ENCODE measurements at regions of chr2 and their contacts with region 1.

Region 1: GRCh38 chr2:113203901-113204519 is 30.2 kb downstream of the PSD4 start:
- DNase-seq: peak; percentile 85 to 90
- H3K4me3 ChIP-seq: no peak overlapping the region
- H3K4me3 Mint-ChIP-seq: no peak overlapping the region
- H3K27ac Mint-ChIP-seq: peak overlapping the region; percentile 65
- H3K4me1 ChIP-seq: peaks cover 14% of the 10 kb centered on the region
- H3K4me1 Mint-ChIP-seq: peaks cover 26% of the 10 kb centered on the region
- H3K27me3 ChIP-seq: no peaks in the 10 kb centered on the region
- H3K27me3 Mint-ChIP-seq: no peaks in the 10 kb centered on the region
- CTCF ChIP-seq: peak; percentile 91 to 92

Region 2: DNA sequence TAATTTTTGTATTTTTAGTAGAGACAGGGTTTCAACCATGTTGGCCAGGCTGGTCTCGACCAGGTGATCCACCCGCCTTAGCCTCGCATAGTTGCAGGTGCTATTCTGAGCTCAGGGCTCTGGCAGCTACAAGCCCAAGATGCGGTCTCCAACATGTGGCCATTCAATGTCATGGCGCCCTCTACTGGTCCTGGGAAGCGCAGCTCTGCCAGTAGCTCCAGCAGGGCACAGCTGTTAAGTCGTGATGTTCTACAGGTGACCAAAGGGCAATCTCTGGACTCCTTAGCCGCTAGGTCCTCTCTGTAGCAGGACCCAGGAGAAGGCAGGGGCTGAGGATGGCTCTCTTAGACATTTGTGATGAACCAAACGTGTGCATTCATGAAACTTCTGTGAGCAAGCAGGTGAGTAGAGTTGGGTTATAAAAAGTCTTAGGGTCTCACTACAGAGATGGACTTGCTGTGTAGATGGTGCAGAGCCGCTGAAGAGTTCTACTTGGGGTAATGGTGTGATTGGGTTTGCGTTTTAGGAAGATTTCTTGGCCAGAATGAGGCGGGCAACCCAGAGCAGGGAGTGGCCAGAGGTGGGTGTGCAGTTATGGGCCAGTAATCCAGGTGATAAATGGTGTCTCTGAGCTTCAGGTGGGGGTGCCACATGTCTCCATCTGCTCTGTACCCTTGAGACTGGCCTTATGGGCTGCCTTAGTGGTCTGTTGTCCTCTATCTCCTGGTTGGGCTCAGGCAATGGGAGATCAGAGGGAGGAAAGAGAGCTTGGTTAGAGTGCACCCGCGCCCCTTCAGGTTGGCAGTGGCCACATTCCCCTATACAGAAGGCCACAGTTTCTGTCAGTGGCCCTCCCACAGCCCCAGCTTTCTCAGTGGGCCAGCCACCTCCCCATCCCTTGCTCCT is 262.0 kb before region 1 on chr2:
- CTCF ChIA-PET with region 1: no interaction called
- POLR2A ChIA-PET with region 1: no interaction called
- intact Hi-C with region 1: no loop called
- DNase-seq: peak; percentile 79 to 84
- H3K4me3 ChIP-seq: no peak overlapping the region
- H3K4me3 Mint-ChIP-seq: no peak overlapping the region
- H3K27ac Mint-ChIP-seq: no peak overlapping the region
- H3K4me1 ChIP-seq: peaks cover 9% of the 10 kb centered on the region; the same call in 1 of the 2 replicates
- H3K4me1 Mint-ChIP-seq: peaks cover 5% of the 10 kb centered on the region
- H3K27me3 ChIP-seq: no peaks in the 10 kb centered on the region
- H3K27me3 Mint-ChIP-seq: no peaks in the 10 kb centered on the region
- CTCF ChIP-seq: peak; percentile 80 to 84

Region 3: GRCh38 chr2:113124181-113124961 is 79.6 kb before region 1 on chr2:
- CTCF ChIA-PET with region 1: no interaction called
- POLR2A ChIA-PET with region 1: no interaction called
- intact Hi-C with region 1: no loop called
- DNase-seq: no peak
- H3K4me3 ChIP-seq: no peak overlapping the region
- H3K4me3 Mint-ChIP-seq: no peak overlapping the region
- H3K27ac Mint-ChIP-seq: no peak overlapping the region
- H3K4me1 ChIP-seq: peaks cover 6% of the 10 kb centered on the region
- H3K4me1 Mint-ChIP-seq: peaks cover 7% of the 10 kb centered on the region
- H3K27me3 ChIP-seq: no peaks in the 10 kb centered on the region
- H3K27me3 Mint-ChIP-seq: peaks cover 3% of the 10 kb centered on the region
- CTCF ChIP-seq: no peak

Region 4: GRCh38 chr2:113219889-113220641 is 16.1 kb after region 1 on chr2:
- CTCF ChIA-PET with region 1: interaction called, 6 read pairs
- POLR2A ChIA-PET with region 1: no interaction called
- intact Hi-C with region 1: loop called (anchors 1 kb)
- DNase-seq: no peak
- H3K4me3 ChIP-seq: no peak overlapping the region
- H3K4me3 Mint-ChIP-seq: no peak overlapping the region
- H3K27ac Mint-ChIP-seq: peak overlapping the region; percentile 98
- H3K4me1 ChIP-seq: peaks cover 54% of the 10 kb centered on the region
- H3K4me1 Mint-ChIP-seq: peaks cover 31% of the 10 kb centered on the region
- H3K27me3 ChIP-seq: no peaks in the 10 kb centered on the region
- H3K27me3 Mint-ChIP-seq: no peaks in the 10 kb centered on the region
- CTCF ChIP-seq: no peak

Region 5: DNA sequence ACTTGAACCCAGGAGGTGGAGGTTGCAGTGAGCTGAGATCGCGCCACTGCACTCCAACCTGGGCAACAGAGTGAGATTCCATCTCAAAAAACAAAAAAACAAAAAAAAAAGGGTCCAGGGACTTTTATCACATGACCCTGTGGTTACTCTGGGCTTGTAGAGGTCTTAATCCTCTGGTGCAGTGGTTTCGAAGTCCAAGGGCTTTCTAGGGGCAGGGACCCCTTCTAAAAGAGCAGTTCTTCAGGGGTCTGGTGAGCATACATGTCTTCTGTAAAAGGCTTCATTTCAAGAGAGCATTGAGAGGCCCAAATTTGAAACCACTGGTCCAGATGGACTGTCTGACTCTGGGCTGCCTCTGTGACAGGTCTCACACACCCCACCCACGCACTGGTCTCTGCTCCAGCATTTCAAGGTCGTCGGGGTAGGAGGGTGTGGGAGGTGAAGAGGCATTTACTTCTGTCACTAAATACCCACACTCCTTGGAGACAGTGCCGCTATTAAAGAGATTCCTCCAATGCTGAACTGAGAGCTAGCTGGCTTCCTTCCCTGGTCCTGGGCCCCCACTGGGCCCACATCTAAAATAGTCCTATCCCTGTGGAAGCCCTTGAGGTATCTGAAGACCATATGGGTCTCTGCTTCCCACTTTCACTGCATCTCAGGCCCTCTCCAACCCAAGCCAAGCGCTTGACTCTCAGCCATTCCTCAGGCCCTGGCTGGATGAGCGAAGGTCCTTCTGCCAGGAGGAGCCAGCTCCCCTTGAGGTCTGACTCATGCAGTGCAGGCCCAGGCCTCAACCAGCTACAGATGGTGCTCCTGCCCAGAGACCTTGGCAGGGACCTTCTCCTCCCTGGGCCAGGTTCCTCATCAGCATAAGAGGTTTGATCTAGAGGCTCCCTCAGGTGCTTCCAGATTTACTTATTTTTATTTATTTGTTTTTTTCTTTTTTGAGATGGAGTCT is 29.9 kb after region 1 on chr2:
- CTCF ChIA-PET with region 1: interaction called, 70 read pairs
- POLR2A ChIA-PET with region 1: interaction called, 17 read pairs
- intact Hi-C with region 1: loop called (anchors 1 kb)
- DNase-seq: peak; percentile 45 to 68
- H3K4me3 ChIP-seq: no peak overlapping the region
- H3K4me3 Mint-ChIP-seq: peak overlapping the region; percentile 95
- H3K27ac Mint-ChIP-seq: peak overlapping the region; percentile 97
- H3K4me1 ChIP-seq: peaks cover 76% of the 10 kb centered on the region
- H3K4me1 Mint-ChIP-seq: peaks cover 54% of the 10 kb centered on the region
- H3K27me3 ChIP-seq: no peaks in the 10 kb centered on the region
- H3K27me3 Mint-ChIP-seq: no peaks in the 10 kb centered on the region
- CTCF ChIP-seq: peak; percentile 40 to 42

Region 6: GRCh38 chr2:113248997-113249770 is 45.2 kb after region 1 on chr2:
- CTCF ChIA-PET with region 1: interaction called, 48 read pairs
- POLR2A ChIA-PET with region 1: no interaction called
- intact Hi-C with region 1: loop called (anchors 1 kb)
- DNase-seq: peak; percentile 78 to 81
- H3K4me3 ChIP-seq: no peak overlapping the region
- H3K4me3 Mint-ChIP-seq: no peak overlapping the region
- H3K27ac Mint-ChIP-seq: no peak overlapping the region
- H3K4me1 ChIP-seq: peaks cover 15% of the 10 kb centered on the region; the same call in 1 of the 2 replicates
- H3K4me1 Mint-ChIP-seq: peaks cover 20% of the 10 kb centered on the region
- H3K27me3 ChIP-seq: no peaks in the 10 kb centered on the region
- H3K27me3 Mint-ChIP-seq: no peaks in the 10 kb centered on the region
- CTCF ChIP-seq: peak; percentile 91

Region 7: DNA sequence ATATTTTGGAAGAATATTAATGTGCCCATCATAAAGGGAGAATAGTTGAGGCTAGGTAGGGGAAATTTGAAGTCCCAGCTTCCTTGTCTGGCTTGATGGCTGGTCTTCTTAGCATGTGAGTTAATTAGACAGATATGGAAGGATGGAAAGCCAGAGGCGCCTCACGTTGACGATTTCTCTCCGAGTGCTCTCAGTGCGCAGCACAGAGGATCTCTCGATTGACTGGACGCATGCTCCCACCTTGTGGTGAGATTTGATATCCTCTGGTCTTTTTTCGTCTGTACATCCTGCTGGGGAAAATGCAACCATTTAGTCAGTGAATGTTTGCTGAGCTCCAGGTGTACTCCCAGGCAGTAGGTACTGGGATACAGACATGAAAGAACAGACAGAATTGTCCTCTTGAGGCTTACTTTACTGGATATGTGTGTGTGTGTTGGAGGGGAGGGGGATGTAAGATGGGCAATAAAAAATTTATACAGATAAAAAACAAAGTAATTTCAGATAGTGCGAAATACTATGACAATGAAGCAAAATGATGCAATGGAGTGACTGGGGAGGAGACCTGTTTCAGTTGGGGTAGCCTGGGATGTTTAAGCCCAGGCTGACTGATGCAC is 166.6 kb after region 1 on chr2:
- CTCF ChIA-PET with region 1: interaction called, 16 read pairs
- POLR2A ChIA-PET with region 1: no interaction called
- intact Hi-C with region 1: loop called (anchors 1 kb)
- DNase-seq: peak; percentile 84 to 85
- H3K4me3 ChIP-seq: no peak overlapping the region
- H3K4me3 Mint-ChIP-seq: no peak overlapping the region
- H3K27ac Mint-ChIP-seq: no peak overlapping the region
- H3K4me1 ChIP-seq: peaks cover 19% of the 10 kb centered on the region
- H3K4me1 Mint-ChIP-seq: peaks cover 22% of the 10 kb centered on the region
- H3K27me3 ChIP-seq: no peaks in the 10 kb centered on the region
- H3K27me3 Mint-ChIP-seq: no peaks in the 10 kb centered on the region
- CTCF ChIP-seq: peak; percentile 63 to 84

Measured in Caco-2 (cell line).